Activated CD4-positive, alpha-beta T cell treated with anti-CD3 and anti-CD28 coated beads for 36 hours (primary cell): ENCODE measurements at regions of chr16 and their contacts with region 1.

Region 1: GRCh38 chr16:62681819-62682218 is 645.6 kb upstream of the CDH8 start:
- DNase-seq: no peak
- ATAC-seq: no peak
- H3K4me3 Mint-ChIP-seq: no peak overlapping the region
- H3K27ac Mint-ChIP-seq: no peak overlapping the region
- H3K4me1 Mint-ChIP-seq: no peaks in the 10 kb centered on the region
- H3K27me3 Mint-ChIP-seq: no peaks in the 10 kb centered on the region

Region 2: GRCh38 chr16:62596125-62596524 is 85.7 kb before region 1 on chr16:
- CTCF ChIA-PET with region 1: no interaction called
- POLR2A ChIA-PET with region 1: no interaction called
- intact Hi-C with region 1: no loop called
- DNase-seq: no peak
- ATAC-seq: no peak
- H3K4me3 Mint-ChIP-seq: no peak overlapping the region
- H3K27ac Mint-ChIP-seq: no peak overlapping the region
- H3K4me1 Mint-ChIP-seq: no peaks in the 10 kb centered on the region
- H3K27me3 Mint-ChIP-seq: no peaks in the 10 kb centered on the region

Region 3: DNA sequence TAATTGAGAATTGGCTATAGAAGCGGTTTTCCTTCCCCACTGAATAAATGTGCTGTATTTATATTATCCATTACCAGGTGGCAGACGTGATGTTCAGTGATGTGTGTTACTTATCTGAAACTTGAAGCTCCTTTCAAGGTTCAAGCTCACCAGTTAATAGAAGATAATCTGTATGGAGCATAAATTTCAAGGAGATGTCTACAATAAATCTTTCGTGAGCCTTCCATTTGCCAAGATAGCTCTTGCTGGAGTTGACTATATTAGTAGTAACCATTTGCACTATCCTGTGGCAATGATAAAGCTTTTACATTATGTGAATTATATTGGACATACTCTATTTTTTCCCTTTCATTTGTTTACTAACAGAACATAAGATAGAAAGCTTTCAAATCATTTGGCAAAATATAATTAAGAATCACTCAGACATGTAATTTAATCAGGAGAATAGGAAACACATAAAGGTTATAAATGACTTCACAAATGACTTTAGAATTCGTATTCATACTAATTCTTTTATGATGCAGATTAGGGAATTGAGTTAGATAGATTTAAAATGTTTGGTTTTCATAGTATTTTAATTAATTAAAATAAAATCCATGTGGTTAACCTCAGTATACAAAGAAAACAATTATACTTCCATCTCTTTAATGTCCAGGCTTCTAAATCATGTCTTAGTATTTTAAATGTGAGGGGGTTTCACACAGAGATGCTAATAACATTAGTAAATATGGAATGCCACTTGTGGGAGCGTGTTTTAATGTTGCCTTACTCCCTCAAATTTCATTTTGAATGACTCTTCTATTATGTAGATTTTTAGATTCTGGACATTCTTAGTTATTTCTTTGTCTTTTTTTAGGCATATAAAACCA is 18.8 kb after region 1 on chr16:
- CTCF ChIA-PET with region 1: no interaction called
- POLR2A ChIA-PET with region 1: no interaction called
- intact Hi-C with region 1: loop called in 1 of 2 experiments (anchors 1 kb)
- DNase-seq: no peak
- ATAC-seq: no peak
- H3K4me3 Mint-ChIP-seq: no peak overlapping the region
- H3K27ac Mint-ChIP-seq: no peak overlapping the region
- H3K4me1 Mint-ChIP-seq: no peaks in the 10 kb centered on the region
- H3K27me3 Mint-ChIP-seq: no peaks in the 10 kb centered on the region